ENCODE measurements at regions of chr15 and their contacts with region 1.

Region 1: DNA sequence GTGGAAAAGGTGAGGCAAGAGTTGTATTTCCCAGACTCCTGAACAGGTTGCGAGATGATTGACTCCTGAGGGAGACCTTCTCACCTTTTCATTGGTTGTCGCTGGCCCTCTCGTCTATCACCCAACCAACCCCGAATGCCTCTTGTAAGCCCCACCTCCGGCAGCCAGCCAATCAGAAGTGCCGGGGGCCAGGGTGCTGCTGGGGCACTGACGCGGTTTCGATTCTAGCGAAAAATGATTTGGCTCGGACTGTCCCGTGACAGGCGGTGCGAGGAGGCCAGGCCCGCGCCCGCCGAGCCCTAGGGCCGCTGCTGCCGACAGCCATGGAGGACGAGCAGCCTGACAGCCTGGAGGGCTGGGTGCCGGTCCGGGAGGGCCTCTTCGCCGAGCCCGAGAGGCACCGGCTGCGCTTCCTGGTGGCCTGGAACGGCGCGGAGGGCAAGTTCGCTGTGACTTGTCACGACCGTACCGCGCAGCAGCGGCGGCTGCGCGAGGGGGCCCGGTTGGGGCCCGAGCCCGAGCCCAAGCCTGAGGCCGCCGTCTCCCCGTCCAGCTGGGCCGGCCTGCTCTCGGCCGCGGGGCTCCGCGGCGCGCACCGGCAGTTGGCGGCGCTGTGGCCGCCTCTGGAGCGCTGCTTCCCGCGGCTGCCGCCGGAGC is at the start of gene WHAMM:
- DNase-seq: peak; percentile 91
- ATAC-seq: peak; percentile 87
- H3K4me3 Mint-ChIP-seq: peak within 1 kb of the TSS; percentile 91
- H3K27ac Mint-ChIP-seq: peak within 1 kb of the TSS; percentile 93
- H3K4me1 Mint-ChIP-seq: peaks cover 71% of the 10 kb centered on the region
- H3K27me3 Mint-ChIP-seq: no peaks in the 10 kb centered on the region
- CTCF ChIP-seq: no peak
- total RNA-seq, gene WHAMM: 17.7 and 18.7 TPM in 2 replicates

Region 2: DNA sequence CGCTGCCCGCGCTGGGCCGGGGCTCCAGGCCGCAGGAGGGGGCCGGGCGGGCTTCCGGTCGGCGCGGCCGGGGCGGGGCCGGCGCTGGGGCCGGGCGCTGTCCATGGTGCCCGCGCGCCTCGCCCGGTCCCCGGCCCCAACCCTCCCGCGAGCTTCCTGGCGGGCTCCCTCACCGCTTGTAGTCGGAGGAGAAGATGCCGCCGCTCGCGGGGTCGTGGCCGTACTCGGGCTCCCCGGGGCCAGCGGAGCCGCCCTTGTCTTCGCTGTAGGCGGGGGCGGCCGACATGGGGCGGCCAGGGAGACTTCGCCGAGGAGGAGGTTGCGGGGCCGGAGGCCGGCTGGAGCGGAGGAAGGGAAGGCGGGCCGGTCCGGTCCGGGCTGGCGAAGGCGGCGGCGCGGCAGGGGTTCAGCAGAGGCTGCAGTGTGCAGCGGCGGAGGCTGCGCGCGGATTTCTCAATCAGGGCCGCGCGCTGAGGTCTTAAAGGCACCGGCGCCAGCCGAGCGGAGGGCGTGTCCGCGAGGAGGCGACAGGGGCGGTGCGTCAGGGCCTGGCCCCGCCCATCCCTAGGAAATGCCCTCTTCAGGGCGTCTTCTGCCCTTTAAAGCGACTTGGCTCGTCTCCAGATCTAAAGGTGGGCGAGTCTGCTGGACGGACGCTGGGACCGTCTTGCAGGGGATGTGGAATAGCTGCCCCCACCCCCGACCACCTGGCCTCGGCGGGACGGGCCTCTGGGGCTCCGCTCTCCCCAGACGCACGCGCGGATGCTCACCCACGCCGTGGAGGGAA is 99.9 kb before region 1 on chr15 and contains the start of gene AP3B2:
- CTCF ChIA-PET with region 1: no interaction called
- POLR2A ChIA-PET with region 1: no interaction called
- intact Hi-C with region 1: loop called (anchors 1 kb)
- DNase-seq: peak; percentile 67
- ATAC-seq: peak; percentile 93
- H3K4me3 Mint-ChIP-seq: peak within 1 kb of the TSS; percentile 77
- H3K27ac Mint-ChIP-seq: no peak within 1 kb of the TSS
- H3K4me1 Mint-ChIP-seq: no peaks in the 10 kb centered on the region
- H3K27me3 Mint-ChIP-seq: peaks cover 29% of the 10 kb centered on the region
- CTCF ChIP-seq: no peak
- total RNA-seq, gene AP3B2: 0.22 and 0.46 TPM in 2 replicates

Region 3: DNA sequence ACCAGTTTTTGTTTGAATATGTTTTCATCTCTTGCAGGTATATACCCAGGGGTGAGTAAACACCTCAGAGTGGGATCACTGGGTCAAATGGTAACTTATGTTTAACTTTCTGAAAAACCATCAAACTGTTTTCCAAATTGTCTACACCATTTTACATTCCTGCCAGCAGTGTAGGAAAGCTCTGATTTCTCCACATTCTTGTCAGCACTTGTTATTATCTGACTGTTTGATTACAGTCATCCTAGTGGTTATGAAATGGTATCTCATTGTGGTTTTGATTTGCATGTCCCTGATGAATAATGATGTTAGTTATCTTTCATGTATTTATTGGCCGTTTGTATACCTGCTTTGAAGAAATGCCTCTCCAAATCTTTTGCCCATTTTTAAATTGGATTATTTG is 17.5 kb before region 1 on chr15:
- CTCF ChIA-PET with region 1: no interaction called
- POLR2A ChIA-PET with region 1: interaction called, 15 read pairs
- intact Hi-C with region 1: no loop called
- DNase-seq: no peak
- ATAC-seq: no peak
- H3K4me3 Mint-ChIP-seq: no peak overlapping the region
- H3K27ac Mint-ChIP-seq: no peak overlapping the region
- H3K4me1 Mint-ChIP-seq: no peaks in the 10 kb centered on the region
- H3K27me3 Mint-ChIP-seq: no peaks in the 10 kb centered on the region
- CTCF ChIP-seq: no peak

Region 4: DNA sequence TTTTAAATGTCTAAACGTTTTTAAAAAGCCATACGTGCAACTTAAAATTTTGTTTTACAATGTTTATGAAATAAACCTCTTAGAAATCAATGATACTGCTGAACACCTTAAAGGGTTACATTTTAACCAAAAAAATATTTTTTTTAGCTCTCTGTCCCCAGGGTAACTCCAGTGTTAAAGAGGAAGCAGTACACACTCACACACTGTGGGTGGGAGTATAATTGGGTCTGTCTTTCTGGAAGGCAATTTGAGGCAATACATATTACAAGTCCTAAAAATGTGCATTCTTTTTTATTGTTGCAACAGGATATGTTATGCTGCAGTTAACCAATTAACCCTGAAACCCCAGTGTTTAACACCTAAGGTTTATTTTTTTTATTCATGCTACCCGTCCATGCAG is 34.0 kb after region 1 on chr15:
- CTCF ChIA-PET with region 1: no interaction called
- POLR2A ChIA-PET with region 1: interaction called, 12 read pairs
- intact Hi-C with region 1: loop called (anchors 1 kb)
- DNase-seq: no peak
- ATAC-seq: no peak
- H3K4me3 Mint-ChIP-seq: peak overlapping the region; percentile 28
- H3K27ac Mint-ChIP-seq: peak overlapping the region; percentile 53
- H3K4me1 Mint-ChIP-seq: peaks cover 31% of the 10 kb centered on the region
- H3K27me3 Mint-ChIP-seq: no peaks in the 10 kb centered on the region
- CTCF ChIP-seq: no peak